CD8-positive, alpha-beta memory T cell (primary cell): ENCODE measurements at regions of chr12 and their contacts with region 1.

Region 1: DNA sequence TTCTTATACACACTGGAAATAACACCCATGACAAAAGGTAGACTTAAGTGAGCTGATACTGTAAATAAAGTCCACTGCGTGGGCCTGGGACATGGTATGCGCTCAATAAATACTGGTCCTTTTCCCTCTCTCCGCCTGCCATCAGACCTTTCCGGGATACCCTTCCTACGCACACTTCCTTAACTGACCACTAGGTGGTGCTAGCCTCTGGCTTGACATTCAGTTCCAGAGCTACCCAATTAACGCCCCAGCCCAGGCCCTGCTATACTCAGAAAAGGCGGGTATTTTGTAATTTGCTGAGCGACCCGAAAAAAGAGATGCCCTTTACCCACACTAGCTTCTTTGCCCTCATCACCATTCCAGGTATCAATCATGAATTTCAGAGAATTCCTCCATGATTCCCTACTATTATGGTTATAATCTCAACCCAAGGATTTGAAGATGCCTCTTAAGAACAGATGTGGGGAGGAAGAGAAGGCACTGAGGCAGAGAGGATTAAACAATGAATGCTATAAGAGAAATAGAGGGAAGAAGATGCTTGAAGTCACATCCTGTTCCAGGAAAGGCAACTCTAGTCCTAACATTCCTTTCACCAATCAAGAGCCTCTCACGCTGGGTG is 3.9 kb upstream of the LRP1 start:
- DNase-seq: peak; percentile 64 to 84 (median 70)
- H3K4me3 ChIP-seq: no peak overlapping the region
- H3K4me3 Mint-ChIP-seq: peak overlapping the region in 2 of 7 donors; percentile 6 to 7
- H3K27ac ChIP-seq: no peak overlapping the region
- H3K27ac Mint-ChIP-seq: peak overlapping the region in 1 of 8 donors; percentile 0
- H3K4me1 ChIP-seq: peaks cover 11% of the 10 kb centered on the region
- H3K4me1 Mint-ChIP-seq: peaks cover 5 to 11% (median 6%) of the 10 kb centered on the region in 3 donors
- H3K27me3 ChIP-seq: no peaks in the 10 kb centered on the region
- H3K27me3 Mint-ChIP-seq: peaks cover 0 to 9% of the 10 kb centered on the region in 2 donors

Region 2: DNA sequence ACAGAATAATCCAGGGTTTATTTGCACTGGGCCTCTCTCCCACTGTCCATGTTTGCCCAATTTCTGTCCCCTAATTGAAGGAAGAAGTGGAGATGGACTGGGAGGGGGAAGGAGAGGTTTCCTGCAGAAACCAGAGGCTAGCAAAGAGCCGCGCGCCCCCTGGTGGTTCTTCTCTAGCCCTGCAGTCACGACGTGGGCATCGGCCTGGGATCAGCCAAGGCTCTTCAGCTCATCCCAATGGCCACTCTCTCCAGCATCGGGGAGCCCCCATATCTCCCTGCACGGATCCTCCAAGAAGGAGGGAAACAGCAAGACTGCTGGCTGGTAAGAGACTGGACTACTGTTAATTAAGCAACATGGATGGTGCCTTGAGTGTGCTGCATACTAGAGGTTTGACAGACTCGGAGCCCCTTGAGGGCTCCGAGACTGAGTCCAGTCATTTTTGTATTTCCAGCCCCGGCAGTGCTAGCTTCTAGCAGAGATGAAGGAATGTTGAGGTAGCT is 136.8 kb before region 1 on chr12:
- CTCF ChIA-PET with region 1: no interaction called
- POLR2A ChIA-PET with region 1: no interaction called
- DNase-seq: peak; percentile 59 to 78 (median 65)
- H3K4me3 ChIP-seq: no peak overlapping the region
- H3K4me3 Mint-ChIP-seq: peak overlapping the region in 5 of 7 donors; percentile 23 to 79 (median 46)
- H3K27ac ChIP-seq: peak overlapping the region; percentile 14
- H3K27ac Mint-ChIP-seq: peak overlapping the region in 2 of 8 donors; percentile 63 to 78
- H3K4me1 ChIP-seq: peaks cover 9% of the 10 kb centered on the region
- H3K4me1 Mint-ChIP-seq: peaks cover 5 to 8% (median 6%) of the 10 kb centered on the region in 3 donors
- H3K27me3 ChIP-seq: no peaks in the 10 kb centered on the region
- H3K27me3 Mint-ChIP-seq: peaks cover 0 to 3% of the 10 kb centered on the region in 2 donors

Region 3: DNA sequence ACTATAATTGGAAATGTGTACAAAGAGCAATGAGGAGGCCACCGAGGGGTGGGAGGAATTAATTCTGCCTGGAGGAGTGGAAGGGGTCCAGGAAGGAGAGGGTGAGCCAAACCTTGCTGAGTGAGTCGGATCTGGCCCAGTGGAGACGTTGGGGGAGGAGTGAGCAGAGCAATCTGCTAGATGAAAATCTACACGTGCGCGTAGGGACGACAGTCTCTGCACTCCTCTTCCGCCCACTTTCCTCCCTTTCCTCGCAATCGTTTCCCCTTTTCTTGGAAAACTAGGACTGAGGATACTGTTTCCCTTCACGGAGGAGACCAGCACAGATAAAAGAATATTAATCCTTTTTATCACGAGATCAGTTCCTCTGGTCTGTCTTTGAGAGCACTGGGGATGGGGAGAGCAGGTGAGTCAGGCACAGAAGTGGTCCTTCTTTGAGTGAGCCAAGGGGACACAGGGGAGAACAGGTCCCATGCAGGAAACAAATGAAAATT is 38.3 kb before region 1 on chr12:
- CTCF ChIA-PET with region 1: no interaction called
- POLR2A ChIA-PET with region 1: no interaction called
- DNase-seq: no peak
- H3K4me3 ChIP-seq: peak overlapping the region; percentile 97
- H3K4me3 Mint-ChIP-seq: peak overlapping the region; percentile 87 to 98 (median 93)
- H3K27ac ChIP-seq: peak overlapping the region; percentile 93
- H3K27ac Mint-ChIP-seq: peak overlapping the region; percentile 87 to 100 (median 98)
- H3K4me1 ChIP-seq: peaks cover 17% of the 10 kb centered on the region
- H3K4me1 Mint-ChIP-seq: peaks cover 32 to 42% (median 35%) of the 10 kb centered on the region in 3 donors
- H3K27me3 ChIP-seq: no peaks in the 10 kb centered on the region
- H3K27me3 Mint-ChIP-seq: no peaks in the 10 kb centered on the region

Region 4: DNA sequence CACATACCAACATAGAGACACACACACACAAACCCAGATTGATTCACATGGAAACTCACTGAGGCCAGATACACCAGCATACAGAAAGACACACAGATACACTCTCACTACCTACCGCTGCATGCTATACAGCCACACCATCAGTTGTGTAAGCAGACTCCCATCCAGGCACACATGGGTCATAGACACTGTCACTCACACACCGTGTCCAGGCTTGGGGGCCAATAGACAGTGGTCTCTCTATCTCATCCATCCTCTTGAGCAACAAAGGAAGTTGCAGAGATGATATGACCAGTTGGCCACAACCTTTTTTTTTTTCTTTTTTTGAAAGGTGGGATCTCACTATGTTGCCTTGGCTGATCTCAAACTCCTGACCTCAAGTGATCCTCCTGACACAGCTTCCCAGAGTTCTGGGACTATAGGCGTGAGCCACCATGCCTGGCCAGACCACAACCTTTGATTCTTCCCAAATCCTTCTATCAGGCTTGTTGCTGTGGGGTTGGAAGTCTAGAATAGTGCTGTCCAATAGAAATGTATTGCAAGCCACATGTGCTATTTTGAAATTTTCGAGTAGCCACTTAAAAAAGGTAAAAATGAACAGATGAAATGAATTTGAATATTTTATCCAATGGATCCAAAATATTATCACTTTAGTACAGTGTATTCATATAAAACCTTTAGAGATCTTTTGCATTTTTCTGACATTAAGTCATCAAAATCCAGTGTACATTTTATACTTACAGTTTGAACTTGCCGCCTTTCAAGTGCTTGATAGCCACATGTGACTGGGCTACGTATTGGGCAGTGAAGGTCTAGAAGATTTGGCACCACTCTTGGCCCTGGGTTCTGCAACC is 15.7 kb after region 1 on chr12:
- CTCF ChIA-PET with region 1: interaction called, 10 read pairs
- POLR2A ChIA-PET with region 1: no interaction called
- DNase-seq: peak in 1 of 5 donors; percentile 7
- H3K4me3 ChIP-seq: no peak overlapping the region
- H3K4me3 Mint-ChIP-seq: no peak overlapping the region
- H3K27ac ChIP-seq: no peak overlapping the region
- H3K27ac Mint-ChIP-seq: no peak overlapping the region
- H3K4me1 ChIP-seq: no peaks in the 10 kb centered on the region
- H3K4me1 Mint-ChIP-seq: peaks cover 0 to 3% (median 0%) of the 10 kb centered on the region in 3 donors
- H3K27me3 ChIP-seq: no peaks in the 10 kb centered on the region
- H3K27me3 Mint-ChIP-seq: peaks cover 0 to 1% of the 10 kb centered on the region in 2 donors

Region 5: DNA sequence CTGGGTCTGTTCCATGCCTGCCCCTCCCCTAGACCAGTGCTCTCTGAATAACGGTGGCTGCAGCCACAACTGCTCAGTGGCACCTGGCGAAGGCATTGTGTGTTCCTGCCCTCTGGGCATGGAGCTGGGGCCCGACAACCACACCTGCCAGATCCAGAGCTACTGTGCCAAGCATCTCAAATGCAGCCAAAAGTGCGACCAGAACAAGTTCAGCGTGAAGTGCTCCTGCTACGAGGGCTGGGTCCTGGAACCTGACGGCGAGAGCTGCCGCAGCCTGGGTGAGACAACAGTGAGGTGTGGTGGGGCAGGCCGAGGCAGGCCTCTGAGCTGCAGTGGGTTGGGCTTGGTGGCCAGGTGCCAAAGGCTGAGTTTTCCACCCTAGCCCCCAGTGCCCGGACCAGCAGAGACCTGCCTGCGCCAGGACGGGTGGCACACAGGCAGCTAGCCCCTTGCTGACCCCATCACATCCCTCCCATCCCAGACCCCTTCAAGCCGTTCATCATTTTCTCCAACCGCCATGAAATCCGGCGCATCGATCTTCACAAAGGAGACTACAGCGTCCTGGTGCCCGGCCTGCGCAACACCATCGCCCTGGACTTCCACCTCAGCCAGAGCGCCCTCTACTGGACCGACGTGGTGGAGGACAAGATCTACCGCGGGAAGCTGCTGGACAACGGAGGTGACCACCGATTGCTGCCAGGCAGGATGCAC is 51.2 kb after region 1 on chr12:
- CTCF ChIA-PET with region 1: interaction called, 173 read pairs
- POLR2A ChIA-PET with region 1: no interaction called
- DNase-seq: peak in 2 of 5 donors; percentile 12 to 19
- H3K4me3 ChIP-seq: no peak overlapping the region
- H3K4me3 Mint-ChIP-seq: no peak overlapping the region
- H3K27ac ChIP-seq: no peak overlapping the region
- H3K27ac Mint-ChIP-seq: no peak overlapping the region
- H3K4me1 ChIP-seq: no peaks in the 10 kb centered on the region
- H3K4me1 Mint-ChIP-seq: no peaks in the 10 kb centered on the region
- H3K27me3 ChIP-seq: no peaks in the 10 kb centered on the region
- H3K27me3 Mint-ChIP-seq: no peaks in the 10 kb centered on the region

Region 6: GRCh38 chr12:57182921-57183790 is 58.8 kb after region 1 on chr12:
- CTCF ChIA-PET with region 1: interaction called, 173 read pairs
- POLR2A ChIA-PET with region 1: no interaction called
- DNase-seq: peak; percentile 65 to 81 (median 67)
- H3K4me3 ChIP-seq: no peak overlapping the region
- H3K4me3 Mint-ChIP-seq: no peak overlapping the region
- H3K27ac ChIP-seq: no peak overlapping the region
- H3K27ac Mint-ChIP-seq: peak overlapping the region in 1 of 8 donors; percentile 47
- H3K4me1 ChIP-seq: no peaks in the 10 kb centered on the region
- H3K4me1 Mint-ChIP-seq: no peaks in the 10 kb centered on the region
- H3K27me3 ChIP-seq: no peaks in the 10 kb centered on the region
- H3K27me3 Mint-ChIP-seq: peaks cover 0 to 2% of the 10 kb centered on the region in 2 donors